Activated T-helper 1 cell treated with anti-CD3 and anti-CD28 coated beads, Interleukin-12 subunit alpha, Interleukin-12 subunit beta, Interleukin-2, Interleukin-4 antibody, amounts not matched to agents 30 ng/mL and 10 ng/mL and 1 ng/mL, durations not matched to agents 14 hours and 24 hours and 36 hours (primary cell): ENCODE measurements at regions of chr12 and their contacts with region 1.

Region 1: GRCh38 chr12:69070319-69071090 is 137.5 kb upstream of the CPM start:
- DNase-seq: peak; percentile 38
- H3K4me3 Mint-ChIP-seq: no peak overlapping the region
- H3K27ac Mint-ChIP-seq: no peak overlapping the region
- H3K4me1 Mint-ChIP-seq: peaks cover 28% of the 10 kb centered on the region
- H3K27me3 Mint-ChIP-seq: peaks cover 4% of the 10 kb centered on the region

Region 2: GRCh38 chr12:68831272-68831671 is 239.2 kb before region 1 on chr12:
- intact Hi-C with region 1: loop called (anchors 1 kb)
- DNase-seq: no peak
- H3K4me3 Mint-ChIP-seq: no peak overlapping the region
- H3K27ac Mint-ChIP-seq: no peak overlapping the region
- H3K4me1 Mint-ChIP-seq: peaks cover 29% of the 10 kb centered on the region
- H3K27me3 Mint-ChIP-seq: no peaks in the 10 kb centered on the region

Region 3: DNA sequence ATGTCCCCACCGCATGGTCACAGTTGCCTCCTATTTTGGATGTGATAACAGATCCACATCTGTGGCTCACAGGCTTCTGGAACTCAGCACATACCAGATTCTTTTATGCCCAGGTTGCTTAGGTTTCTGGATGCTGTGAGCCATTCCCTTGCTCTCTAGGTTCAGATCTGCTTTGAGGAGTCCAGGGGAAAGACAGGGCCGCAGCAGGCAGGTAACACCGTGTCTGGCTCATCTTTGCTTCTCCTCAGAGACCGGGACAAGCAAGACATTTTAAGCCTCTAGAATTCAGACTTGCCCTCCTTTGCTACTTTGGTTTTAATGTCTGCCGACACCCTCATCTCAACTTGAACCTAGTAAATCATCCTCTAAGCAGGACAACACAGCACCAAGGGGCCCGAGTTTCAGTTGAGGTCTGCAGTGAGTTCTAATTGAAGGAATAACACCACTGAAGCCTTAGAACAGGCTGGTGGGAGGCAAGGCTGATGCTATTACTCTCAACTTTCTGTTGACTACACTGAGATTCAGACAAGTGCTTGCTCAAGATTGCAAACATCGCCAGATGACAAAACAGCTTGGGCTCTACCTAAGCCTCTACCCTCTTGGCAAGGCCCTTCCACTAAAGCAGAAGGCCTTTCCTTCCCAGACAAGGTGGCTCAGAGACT is 207.3 kb before region 1 on chr12:
- intact Hi-C with region 1: loop called (anchors 1 kb)
- DNase-seq: no peak
- H3K4me3 Mint-ChIP-seq: no peak overlapping the region
- H3K27ac Mint-ChIP-seq: no peak overlapping the region
- H3K4me1 Mint-ChIP-seq: peaks cover 18% of the 10 kb centered on the region
- H3K27me3 Mint-ChIP-seq: no peaks in the 10 kb centered on the region

Region 4: DNA sequence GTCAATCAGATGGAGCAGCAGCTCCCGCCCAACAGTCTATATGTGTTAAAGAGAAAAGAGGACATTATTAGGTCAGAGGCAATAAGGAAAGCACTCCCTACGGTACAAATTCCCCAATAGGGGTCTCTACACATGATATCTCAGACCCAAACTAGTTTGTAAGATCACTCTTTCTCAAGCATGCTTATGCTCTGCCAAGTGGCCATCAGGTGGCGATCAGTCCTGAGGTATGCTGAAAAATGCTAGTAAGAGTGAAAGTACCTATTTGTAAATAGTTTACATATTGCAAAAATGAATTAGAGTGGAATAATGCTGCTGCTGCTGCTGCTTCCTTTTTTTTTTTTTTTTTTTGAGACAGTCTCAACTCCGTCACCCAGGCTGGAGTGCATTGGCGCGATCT is 198.6 kb before region 1 on chr12:
- intact Hi-C with region 1: loop called (anchors 1 kb)
- DNase-seq: no peak
- H3K4me3 Mint-ChIP-seq: no peak overlapping the region
- H3K27ac Mint-ChIP-seq: peak overlapping the region; percentile 29
- H3K4me1 Mint-ChIP-seq: peaks cover 5% of the 10 kb centered on the region
- H3K27me3 Mint-ChIP-seq: no peaks in the 10 kb centered on the region

Region 5: DNA sequence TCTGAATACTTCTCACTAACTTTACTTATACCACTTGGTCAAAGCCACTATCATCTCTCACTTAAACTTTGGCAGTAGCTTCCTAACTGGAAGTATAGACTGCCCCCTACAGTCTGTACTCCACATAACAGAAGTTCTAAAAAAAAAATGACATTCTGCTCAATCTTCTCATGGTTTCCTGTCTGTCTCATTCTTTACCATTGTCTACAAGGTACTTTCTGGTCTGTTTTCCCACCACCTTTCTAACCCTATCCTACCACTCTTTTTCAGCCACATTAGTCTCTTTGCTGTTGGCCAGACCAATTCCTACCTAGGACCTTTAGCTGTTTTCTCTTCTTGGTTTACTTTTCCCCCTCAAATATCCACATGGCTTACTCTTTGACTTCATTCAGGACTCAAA is 183.5 kb after region 1 on chr12:
- intact Hi-C with region 1: loop called (anchors 5 kb)
- DNase-seq: no peak
- H3K4me3 Mint-ChIP-seq: no peak overlapping the region
- H3K27ac Mint-ChIP-seq: peak overlapping the region; percentile 52
- H3K4me1 Mint-ChIP-seq: peaks cover 41% of the 10 kb centered on the region
- H3K27me3 Mint-ChIP-seq: no peaks in the 10 kb centered on the region